Activated T-helper 2 cell treated with anti-CD3 and anti-CD28 coated beads, Interferon-gamma antibody, Interleukin-2, Interleukin-4, amounts not matched to agents 10 μg/mL and 5 μg/mL and 100 μg/mL, durations not matched to agents 14 hours and 24 hours and 36 hours (primary cell): ENCODE measurements at regions of chr3 and their contacts with region 1.

Region 1: GRCh38 chr3:123258811-123259420 is 57.2 kb downstream of the SEC22A start:
- DNase-seq: no peak
- H3K4me3 Mint-ChIP-seq: no peak overlapping the region
- H3K27ac Mint-ChIP-seq: no peak overlapping the region
- H3K4me1 Mint-ChIP-seq: peaks cover 4% of the 10 kb centered on the region
- H3K27me3 Mint-ChIP-seq: no peaks in the 10 kb centered on the region

Region 2: DNA sequence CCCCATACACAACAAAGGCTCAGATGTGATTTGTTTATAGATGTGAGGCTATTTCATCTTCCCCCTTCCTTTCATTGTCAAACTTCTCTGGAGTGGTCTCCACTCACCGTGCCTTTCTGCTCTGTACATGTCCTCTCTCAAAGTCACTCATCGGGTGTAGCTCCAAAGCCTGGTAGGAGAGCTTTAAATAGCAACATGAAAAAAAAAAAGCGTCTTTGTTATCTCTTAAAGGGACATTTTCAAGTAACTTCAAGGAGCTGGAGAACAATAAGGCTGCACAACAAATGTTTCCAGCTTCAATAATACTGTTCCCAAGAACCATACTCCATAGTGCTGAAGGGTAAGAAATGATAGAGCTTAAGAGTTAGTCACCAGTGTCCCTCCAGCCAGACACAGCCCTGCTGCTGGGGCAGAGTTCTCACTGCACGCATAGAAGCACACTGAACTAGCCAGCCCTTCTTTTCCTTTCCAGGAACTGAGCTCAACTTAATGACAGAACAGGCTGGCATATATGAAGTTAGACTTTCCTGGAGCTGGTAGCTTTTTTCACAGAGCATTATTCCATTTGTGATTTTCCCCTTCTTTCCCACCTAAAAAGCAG is 1657.6 kb before region 1 on chr3:
- intact Hi-C with region 1: no loop called
- DNase-seq: no peak
- H3K4me3 Mint-ChIP-seq: no peak overlapping the region
- H3K27ac Mint-ChIP-seq: no peak overlapping the region
- H3K4me1 Mint-ChIP-seq: no peaks in the 10 kb centered on the region
- H3K27me3 Mint-ChIP-seq: peaks cover 5% of the 10 kb centered on the region

Region 3: DNA sequence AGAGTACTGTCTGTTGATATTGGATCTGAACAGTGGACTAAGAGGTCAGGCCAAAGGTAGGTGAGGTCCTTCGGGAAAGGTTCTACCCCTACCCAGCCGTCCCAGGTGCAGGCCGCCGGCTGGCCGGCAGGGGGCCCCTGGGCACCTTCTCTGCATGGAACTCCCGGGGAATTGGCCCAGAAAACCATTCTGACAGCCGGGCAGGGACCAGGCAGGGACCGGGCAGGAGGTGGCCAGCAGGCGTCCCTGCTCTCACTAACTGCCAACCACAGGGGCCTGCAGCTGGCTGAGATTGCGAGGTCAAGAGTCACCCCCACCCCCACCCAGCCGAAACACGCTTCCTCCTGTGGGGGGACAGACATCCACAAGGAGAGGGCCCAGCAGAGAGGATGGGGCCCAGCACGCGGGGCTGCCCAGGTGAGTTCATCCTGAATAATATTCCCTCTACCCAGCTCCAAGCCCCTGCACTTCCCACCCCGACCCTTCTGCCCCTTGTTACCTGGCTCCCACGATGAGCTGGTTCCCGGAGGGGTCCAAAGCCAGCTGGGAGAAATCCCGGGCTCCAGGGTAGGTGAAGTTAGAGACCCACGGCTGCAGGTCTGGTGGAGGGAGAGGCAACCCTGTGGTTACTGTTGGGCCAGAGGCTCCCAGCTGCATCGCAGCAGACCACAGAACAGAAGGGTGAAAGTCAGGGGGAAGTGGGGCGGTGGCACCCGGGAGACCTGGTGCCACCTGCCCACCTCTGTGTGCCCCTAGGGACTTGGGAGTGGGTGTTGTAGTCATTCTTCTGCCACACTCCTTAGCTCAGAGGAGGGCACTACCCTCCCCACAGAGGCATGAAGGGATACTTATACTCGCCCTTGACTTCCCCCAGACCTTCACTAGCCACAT is 315.7 kb before region 1 on chr3:
- intact Hi-C with region 1: loop called (anchors 10 kb)
- DNase-seq: peak; percentile 15
- H3K4me3 Mint-ChIP-seq: no peak overlapping the region
- H3K27ac Mint-ChIP-seq: no peak overlapping the region
- H3K4me1 Mint-ChIP-seq: no peaks in the 10 kb centered on the region
- H3K27me3 Mint-ChIP-seq: peaks cover 10% of the 10 kb centered on the region

Region 4: GRCh38 chr3:123028233-123028828 is 230.6 kb before region 1 on chr3:
- intact Hi-C with region 1: loop called (anchors 5 kb)
- DNase-seq: no peak
- H3K4me3 Mint-ChIP-seq: peak overlapping the region; percentile 59
- H3K27ac Mint-ChIP-seq: no peak overlapping the region
- H3K4me1 Mint-ChIP-seq: peaks cover 11% of the 10 kb centered on the region
- H3K27me3 Mint-ChIP-seq: peaks cover 53% of the 10 kb centered on the region

Region 5: DNA sequence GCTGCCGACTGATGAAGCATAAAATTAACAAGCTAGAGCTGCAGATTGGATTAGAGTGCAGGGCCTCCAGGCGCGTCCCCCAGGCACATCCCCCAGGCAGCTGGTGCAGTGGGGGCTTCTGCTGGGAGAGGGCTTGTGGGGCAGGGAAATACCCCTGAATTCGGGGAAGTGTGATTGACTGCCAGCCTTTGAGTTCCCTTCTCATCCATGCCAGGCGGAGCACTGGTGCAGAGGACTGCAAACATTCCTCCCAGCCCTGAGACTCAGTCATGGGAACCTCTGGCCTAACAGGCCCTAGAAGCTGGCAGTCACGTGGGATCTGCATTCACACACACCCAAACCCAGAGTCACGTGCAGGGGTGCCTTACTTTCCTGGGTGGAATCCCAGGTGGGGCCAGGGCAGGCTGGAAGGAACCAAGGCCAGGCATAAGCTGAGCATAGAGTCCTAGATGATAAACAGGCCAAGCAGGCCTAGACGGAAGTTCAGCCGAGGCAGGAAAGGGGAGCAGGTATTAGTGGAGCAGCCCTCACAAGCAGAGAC is 103.4 kb before region 1 on chr3:
- intact Hi-C with region 1: loop called (anchors 5 kb)
- DNase-seq: no peak
- H3K4me3 Mint-ChIP-seq: no peak overlapping the region
- H3K27ac Mint-ChIP-seq: no peak overlapping the region
- H3K4me1 Mint-ChIP-seq: peaks cover 2% of the 10 kb centered on the region
- H3K27me3 Mint-ChIP-seq: no peaks in the 10 kb centered on the region

Region 6: GRCh38 chr3:123186695-123187094 is 72.2 kb before region 1 on chr3:
- intact Hi-C with region 1: no loop called
- DNase-seq: no peak
- H3K4me3 Mint-ChIP-seq: no peak overlapping the region
- H3K27ac Mint-ChIP-seq: no peak overlapping the region
- H3K4me1 Mint-ChIP-seq: no peaks in the 10 kb centered on the region
- H3K27me3 Mint-ChIP-seq: no peaks in the 10 kb centered on the region

Region 7: GRCh38 chr3:123382846-123383746 is 124.2 kb after region 1 on chr3:
- intact Hi-C with region 1: no loop called
- DNase-seq: no peak
- H3K4me3 Mint-ChIP-seq: no peak overlapping the region
- H3K27ac Mint-ChIP-seq: no peak overlapping the region
- H3K4me1 Mint-ChIP-seq: no peaks in the 10 kb centered on the region
- H3K27me3 Mint-ChIP-seq: peaks cover 3% of the 10 kb centered on the region

Region 8: DNA sequence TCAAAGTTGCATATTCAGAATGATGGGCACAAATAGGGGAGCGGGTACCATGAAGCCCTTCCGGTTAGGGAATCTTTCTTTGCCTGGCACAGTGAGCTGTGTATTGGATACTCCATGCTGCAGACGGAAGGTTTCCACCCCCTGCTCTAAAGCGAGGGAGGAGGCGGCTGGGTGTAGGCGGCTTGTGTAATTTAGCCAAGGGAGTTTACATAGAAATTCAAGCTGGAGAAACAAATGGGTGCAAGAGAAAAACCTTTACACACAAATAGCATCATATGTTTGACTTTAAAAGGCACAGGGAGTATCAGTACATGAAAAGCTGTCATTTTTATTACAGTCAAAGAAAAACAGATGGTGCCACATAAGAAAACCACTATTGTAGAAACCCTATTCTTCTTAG is 249.3 kb after region 1 on chr3:
- intact Hi-C with region 1: no loop called
- DNase-seq: no peak
- H3K4me3 Mint-ChIP-seq: no peak overlapping the region
- H3K27ac Mint-ChIP-seq: no peak overlapping the region
- H3K4me1 Mint-ChIP-seq: peaks cover 1% of the 10 kb centered on the region
- H3K27me3 Mint-ChIP-seq: no peaks in the 10 kb centered on the region